ENCODE measurements at regions of chr1 and their contacts with region 1.

Region 1: DNA sequence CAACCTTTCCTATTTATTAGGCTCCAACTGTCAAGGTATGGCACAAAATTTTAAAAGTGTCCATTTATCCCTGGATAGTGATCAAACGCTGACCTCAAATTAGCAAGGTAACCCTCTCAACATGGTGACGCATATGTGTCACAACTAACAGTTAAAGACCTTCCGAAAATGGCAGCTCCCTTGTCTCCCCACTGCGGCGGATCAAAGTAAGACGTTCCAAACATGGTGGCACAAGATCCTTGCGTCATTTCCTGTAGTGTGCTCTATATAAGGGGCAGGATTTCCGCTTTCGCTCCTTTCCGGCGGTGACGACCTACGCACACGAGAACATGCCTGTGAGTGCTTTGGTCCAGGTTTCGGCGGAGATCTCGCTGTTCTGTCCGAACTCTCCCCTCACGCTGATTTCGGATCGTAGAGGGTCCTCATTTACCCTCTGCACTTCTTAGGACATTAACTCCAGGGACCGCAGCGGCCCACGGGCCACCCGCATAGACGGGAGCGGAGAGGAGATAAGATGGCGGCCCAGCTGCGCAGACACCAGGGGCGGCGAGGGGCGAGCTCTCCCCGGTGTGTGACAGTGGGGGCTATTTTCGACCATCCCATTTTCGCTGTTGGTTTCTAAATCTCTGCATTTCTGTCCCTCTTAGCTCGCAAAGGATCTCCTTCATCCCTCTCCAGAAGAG is at the start of gene RPS27:
- DNase-seq: peak; percentile 73
- ATAC-seq: peak; percentile 80
- H3K4me3 Mint-ChIP-seq: peak within 1 kb of the TSS; percentile 98
- H3K27ac Mint-ChIP-seq: peak within 1 kb of the TSS; percentile 99
- H3K4me1 Mint-ChIP-seq: peaks cover 53% of the 10 kb centered on the region
- H3K27me3 Mint-ChIP-seq: no peaks in the 10 kb centered on the region
- CTCF ChIP-seq: no peak
- total RNA-seq, gene RPS27: 3,463 and 4,673 TPM in 2 replicates

Region 2: GRCh38 chr1:153510984-153511410 is 479.6 kb before region 1 on chr1:
- CTCF ChIA-PET with region 1: interaction called, 12 read pairs
- POLR2A ChIA-PET with region 1: interaction called, 3 read pairs
- intact Hi-C with region 1: loop called (anchors 2 kb)
- DNase-seq: peak; percentile 67
- ATAC-seq: peak; percentile 97
- H3K4me3 Mint-ChIP-seq: no peak overlapping the region
- H3K27ac Mint-ChIP-seq: no peak overlapping the region
- H3K4me1 Mint-ChIP-seq: peaks cover 4% of the 10 kb centered on the region
- H3K27me3 Mint-ChIP-seq: no peaks in the 10 kb centered on the region
- CTCF ChIP-seq: peak; percentile 81

Region 3: GRCh38 chr1:153670859-153671627 is 319.6 kb before region 1 on chr1 and contains the start of gene ILF2:
- CTCF ChIA-PET with region 1: interaction called, 6 read pairs
- POLR2A ChIA-PET with region 1: interaction called, 13 read pairs
- intact Hi-C with region 1: loop called (anchors 1 kb)
- DNase-seq: peak; percentile 85
- ATAC-seq: peak; percentile 83
- H3K4me3 Mint-ChIP-seq: no peak within 1 kb of the TSS
- H3K27ac Mint-ChIP-seq: no peak within 1 kb of the TSS
- H3K4me1 Mint-ChIP-seq: peaks cover 28% of the 10 kb centered on the region
- H3K27me3 Mint-ChIP-seq: no peaks in the 10 kb centered on the region
- CTCF ChIP-seq: no peak
- total RNA-seq, gene ILF2: 182 and 191 TPM in 2 replicates

Region 4: DNA sequence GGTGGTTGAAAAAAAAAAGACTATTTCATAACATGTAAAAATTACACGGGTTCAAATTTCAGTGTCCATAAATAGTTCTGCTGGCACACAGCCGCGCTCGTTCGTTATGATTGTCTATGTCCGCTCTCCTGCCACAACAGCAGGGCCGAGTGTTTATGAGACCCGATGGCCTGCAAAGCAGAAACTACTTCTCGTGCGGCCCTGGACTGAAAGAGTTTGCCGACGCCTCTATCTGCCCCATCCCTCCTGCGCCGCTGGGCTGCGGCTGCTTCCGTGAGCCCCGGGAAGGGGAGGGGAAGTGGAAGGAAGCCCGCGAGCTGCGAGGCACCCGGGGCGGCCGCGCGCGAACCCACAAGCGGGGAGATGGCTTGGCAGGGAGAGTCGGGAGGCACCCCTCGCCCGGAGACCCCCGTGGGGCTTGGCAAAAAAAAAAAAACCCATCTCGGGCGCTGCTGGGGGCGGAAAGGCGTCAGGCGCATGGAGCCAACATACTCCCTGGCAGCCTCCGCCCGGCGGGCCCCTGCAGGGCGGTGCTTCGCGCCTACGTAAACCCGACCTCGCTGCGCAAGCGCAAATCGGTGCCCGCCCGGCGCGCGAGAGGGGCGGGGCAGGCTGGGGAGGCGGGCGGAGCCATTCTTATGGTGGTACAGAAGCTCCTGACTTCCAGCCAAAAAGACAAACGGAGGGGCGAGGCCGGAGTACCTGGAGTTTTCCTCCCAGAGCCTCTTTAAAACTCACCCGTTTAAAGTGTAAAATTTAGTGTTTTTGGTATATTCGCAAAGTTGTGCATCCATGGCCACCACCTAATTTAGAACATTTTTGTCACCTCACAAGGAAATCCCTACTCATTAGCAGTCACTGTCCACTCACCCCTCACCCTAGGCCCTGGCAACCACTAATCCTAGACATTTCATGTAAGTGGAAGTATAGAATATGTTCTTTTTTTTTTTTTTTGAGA is 207.1 kb before region 1 on chr1:
- CTCF ChIA-PET with region 1: no interaction called
- POLR2A ChIA-PET with region 1: interaction called, 20 read pairs
- intact Hi-C with region 1: no loop called
- DNase-seq: peak; percentile 92
- ATAC-seq: peak; percentile 96
- H3K4me3 Mint-ChIP-seq: peak overlapping the region; percentile 93
- H3K27ac Mint-ChIP-seq: peak overlapping the region; percentile 96
- H3K4me1 Mint-ChIP-seq: peaks cover 25% of the 10 kb centered on the region
- H3K27me3 Mint-ChIP-seq: no peaks in the 10 kb centered on the region
- CTCF ChIP-seq: no peak

Region 5: GRCh38 chr1:153827168-153827964 is 163.2 kb before region 1 on chr1:
- CTCF ChIA-PET with region 1: interaction called, 49 read pairs
- POLR2A ChIA-PET with region 1: interaction called, 5 read pairs
- intact Hi-C with region 1: no loop called
- DNase-seq: no peak
- ATAC-seq: no peak
- H3K4me3 Mint-ChIP-seq: no peak overlapping the region
- H3K27ac Mint-ChIP-seq: no peak overlapping the region
- H3K4me1 Mint-ChIP-seq: peaks cover 11% of the 10 kb centered on the region
- H3K27me3 Mint-ChIP-seq: no peaks in the 10 kb centered on the region
- CTCF ChIP-seq: no peak

Region 6: DNA sequence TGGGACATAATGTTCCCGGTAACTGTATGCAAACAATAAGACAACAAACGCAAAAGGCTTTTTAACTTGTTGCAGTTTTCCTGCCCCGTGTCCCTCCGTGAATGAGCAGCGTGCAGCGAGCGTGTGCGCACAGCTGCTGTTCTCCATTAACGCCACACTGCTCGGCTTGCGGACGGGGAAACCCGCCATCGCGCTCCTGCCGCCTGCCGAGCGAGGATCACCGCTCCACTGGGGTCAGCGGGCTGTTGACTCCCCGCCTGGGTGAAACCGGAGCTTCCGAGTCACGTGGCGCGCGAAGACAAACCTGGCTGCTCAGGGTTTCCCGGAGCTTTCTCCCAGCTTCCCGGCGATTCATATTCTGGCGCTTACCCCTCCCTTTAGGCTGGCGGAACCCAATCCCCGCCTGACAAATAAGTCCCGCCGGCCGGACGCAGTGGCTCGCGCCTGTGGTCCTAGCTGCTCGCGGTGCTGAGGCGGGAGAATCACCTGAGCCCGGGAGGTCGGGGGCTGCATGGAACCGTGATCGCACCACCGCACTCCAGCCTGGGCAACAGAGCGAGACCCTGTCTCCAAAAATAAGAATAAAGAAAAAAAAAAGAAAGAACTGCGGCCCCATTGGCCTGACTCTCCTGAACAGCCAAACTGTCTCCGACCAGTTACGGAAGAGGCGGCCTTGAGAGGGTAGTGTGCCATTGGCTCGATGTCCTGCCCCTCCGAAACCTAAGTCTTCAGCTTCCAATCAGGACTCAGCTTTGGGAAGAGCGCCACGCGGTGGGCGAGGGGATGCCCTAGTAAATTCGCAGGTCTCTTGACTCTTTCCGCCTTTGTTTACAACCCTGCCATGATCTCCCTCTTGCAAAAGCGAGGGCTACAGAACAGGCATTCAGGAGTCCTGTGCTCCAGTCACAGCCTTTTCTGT is 23.3 kb before region 1 on chr1 and contains the start of gene CREB3L4:
- CTCF ChIA-PET with region 1: interaction called, 28 read pairs
- POLR2A ChIA-PET with region 1: interaction called, 85 read pairs
- intact Hi-C with region 1: loop called (anchors 1 kb)
- DNase-seq: peak; percentile 72
- ATAC-seq: peak; percentile 85
- H3K4me3 Mint-ChIP-seq: peak within 1 kb of the TSS; percentile 96
- H3K27ac Mint-ChIP-seq: peak within 1 kb of the TSS; percentile 97
- H3K4me1 Mint-ChIP-seq: peaks cover 62% of the 10 kb centered on the region
- H3K27me3 Mint-ChIP-seq: no peaks in the 10 kb centered on the region
- CTCF ChIP-seq: no peak
- total RNA-seq, gene CREB3L4: 9.4 and 10.2 TPM in 2 replicates

Region 7: DNA sequence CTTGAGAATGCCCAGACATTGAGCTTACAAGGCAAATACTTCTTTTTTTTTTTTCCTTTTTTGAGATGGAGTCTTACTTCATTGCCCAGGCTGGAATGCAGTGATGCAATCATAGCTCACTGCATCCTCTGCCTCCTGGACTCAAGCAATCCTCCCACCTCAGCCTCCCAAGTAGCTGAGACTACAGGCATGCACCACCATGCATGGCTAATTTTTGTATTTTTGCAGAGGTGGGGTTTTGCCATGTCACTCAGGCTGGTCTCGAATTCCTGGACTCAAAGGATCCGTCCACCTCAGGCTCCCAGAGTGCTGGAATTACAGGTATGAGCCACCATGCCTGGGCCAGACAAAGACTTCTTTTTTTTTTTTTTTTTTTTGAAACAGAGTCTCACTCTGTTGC is 85.1 kb after region 1 on chr1:
- CTCF ChIA-PET with region 1: no interaction called
- POLR2A ChIA-PET with region 1: no interaction called
- intact Hi-C with region 1: no loop called
- DNase-seq: no peak
- ATAC-seq: no peak
- H3K4me3 Mint-ChIP-seq: no peak overlapping the region
- H3K27ac Mint-ChIP-seq: no peak overlapping the region
- H3K4me1 Mint-ChIP-seq: no peaks in the 10 kb centered on the region
- H3K27me3 Mint-ChIP-seq: peaks cover 11% of the 10 kb centered on the region
- CTCF ChIP-seq: no peak